ENCODE measurements at regions of chr15 and their contacts with region 1.

Region 1: DNA sequence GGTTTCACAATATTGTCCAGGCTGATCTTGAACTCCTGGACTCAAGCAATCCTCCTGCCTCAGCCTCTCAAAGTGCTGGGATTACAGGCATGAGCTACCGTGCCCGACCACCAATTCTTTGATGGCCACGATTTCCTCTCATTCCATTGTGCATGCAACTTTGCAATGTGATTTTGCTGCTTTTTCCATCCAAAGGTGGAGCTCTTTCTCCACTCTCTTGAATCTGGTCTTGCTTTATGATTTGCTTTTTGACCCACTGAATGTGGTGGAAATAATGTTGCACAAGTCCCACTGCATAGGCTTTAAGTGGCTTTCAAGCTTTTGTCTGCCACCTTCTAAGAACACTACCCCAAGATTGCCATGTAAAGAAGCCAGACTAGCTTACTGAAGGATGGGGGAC is 10.6 kb downstream of the RPS27L start:
- DNase-seq: no peak
- H3K4me3 ChIP-seq: no peak overlapping the region
- H3K27ac ChIP-seq: no peak overlapping the region
- H3K4me1 ChIP-seq: no peaks in the 10 kb centered on the region
- H3K27me3 ChIP-seq: no peaks in the 10 kb centered on the region
- CTCF ChIP-seq: no peak
- EP300 ChIP-seq: no peak
- POLR2A ChIP-seq: no peak
- RAD21 ChIP-seq: peak; percentile 18 to 21; a peak in 1 of 4 replicates

Region 2: GRCh38 chr15:63135804-63136203 is 10.9 kb before region 1 on chr15:
- CTCF ChIA-PET with region 1: interaction called, 10 read pairs
- POLR2A ChIA-PET with region 1: interaction called, 4 read pairs
- DNase-seq: no peak
- H3K4me3 ChIP-seq: no peak overlapping the region
- H3K27ac ChIP-seq: no peak overlapping the region
- H3K4me1 ChIP-seq: no peaks in the 10 kb centered on the region
- H3K27me3 ChIP-seq: no peaks in the 10 kb centered on the region
- CTCF ChIP-seq: no peak
- EP300 ChIP-seq: no peak
- POLR2A ChIP-seq: no peak
- RAD21 ChIP-seq: no peak

Region 3: DNA sequence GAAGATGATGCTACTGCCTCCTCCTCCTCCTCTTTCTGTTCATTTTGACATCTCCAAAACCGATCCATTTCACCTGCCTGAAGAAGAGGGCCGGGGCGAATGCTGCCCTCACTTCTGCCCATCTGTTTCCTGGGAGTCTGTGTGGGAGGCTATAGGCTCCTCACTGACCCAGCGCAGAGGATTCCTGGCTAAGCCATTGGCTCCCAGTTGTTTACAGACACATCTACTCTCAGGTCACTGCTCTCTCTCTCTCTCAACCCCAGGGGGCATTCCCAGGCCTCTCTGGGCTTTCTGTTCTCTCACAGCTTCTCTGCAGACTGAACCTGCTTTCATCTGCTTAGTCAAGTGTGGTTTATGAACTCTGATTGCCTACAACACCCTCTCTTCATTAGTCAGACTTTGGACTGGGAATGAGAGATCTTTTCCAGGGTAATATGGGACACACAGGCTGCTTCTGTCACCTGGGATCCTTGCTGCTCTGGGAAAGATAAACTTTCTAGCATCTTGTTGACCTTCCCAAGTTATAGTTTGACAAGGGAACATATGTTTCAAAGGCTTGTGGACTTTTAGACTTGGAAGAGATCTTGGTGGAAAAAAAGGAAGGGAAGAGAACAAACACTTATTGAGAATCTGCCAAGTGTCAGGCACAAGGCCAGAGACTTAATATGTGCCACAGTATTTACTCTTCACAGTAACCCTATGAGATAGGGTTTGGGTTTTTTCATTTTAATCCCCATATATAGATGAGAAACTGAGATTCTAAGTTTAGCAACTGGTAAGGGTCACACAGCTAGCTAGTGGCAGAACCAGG is 327.5 kb after region 1 on chr15:
- CTCF ChIA-PET with region 1: no interaction called
- POLR2A ChIA-PET with region 1: no interaction called
- DNase-seq: peak in 1 of 2 experiments; percentile 62
- H3K4me3 ChIP-seq: no peak overlapping the region
- H3K27ac ChIP-seq: no peak overlapping the region
- H3K4me1 ChIP-seq: no peaks in the 10 kb centered on the region; a peak in 3 of 7 replicates
- H3K27me3 ChIP-seq: no peaks in the 10 kb centered on the region
- CTCF ChIP-seq: no peak
- EP300 ChIP-seq: no peak
- POLR2A ChIP-seq: no peak
- RAD21 ChIP-seq: no peak

Measured in H1 (cell line).